H1 (cell line): ENCODE measurements at regions of chr20 and their contacts with region 1.

Region 1: DNA sequence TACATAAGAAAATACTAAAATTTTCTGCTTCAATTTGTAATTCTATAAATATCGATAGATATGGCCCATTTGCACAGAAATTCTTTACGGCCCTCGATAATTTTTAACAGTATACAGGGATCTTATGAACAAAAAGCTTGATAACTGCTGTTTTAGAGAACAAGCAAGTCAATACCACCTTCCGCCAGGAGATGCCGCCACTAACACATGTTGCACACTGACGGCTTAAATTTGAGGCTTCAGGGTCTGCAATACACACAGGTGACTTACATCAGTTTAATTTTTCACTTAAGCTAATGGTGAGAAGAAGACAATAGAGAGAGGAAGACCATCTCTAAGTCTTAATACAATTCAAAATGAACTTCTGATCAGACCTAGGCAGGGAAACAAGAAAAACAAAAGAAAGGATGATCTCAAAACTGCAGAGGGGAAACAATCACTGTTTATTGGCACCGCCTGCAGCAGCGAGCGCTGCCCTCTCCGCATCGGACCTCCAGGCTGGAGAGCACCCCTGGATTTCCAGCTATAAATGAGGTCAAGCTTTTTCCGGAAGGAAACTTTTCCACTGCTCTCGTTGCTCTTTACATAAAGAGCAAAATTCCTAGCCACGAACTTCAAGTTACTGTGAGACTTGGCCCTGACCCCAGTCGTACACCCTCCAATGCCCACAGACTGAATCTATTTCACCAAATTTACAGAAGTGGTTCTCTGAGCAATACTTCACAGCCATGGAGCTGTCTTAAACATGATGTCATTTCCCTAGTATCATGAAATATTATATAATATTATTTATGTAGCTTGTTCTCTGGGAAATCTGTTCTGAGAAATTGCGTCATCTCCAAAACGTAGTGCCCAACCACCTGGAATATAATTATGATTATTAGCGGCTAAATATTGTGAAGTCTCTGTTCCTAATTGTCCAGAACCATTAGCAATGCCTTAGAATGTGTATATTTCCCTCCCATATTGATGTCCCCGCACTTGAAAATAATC is 54.1 kb downstream of the OTOR start:
- DNase-seq: peak; percentile 49 to 93
- H3K4me3 ChIP-seq: no peak overlapping the region
- H3K27ac ChIP-seq: no peak overlapping the region
- H3K4me1 ChIP-seq: no peaks in the 10 kb centered on the region
- H3K27me3 ChIP-seq: no peaks in the 10 kb centered on the region
- CTCF ChIP-seq: peak; percentile 63 to 81 (median 78)
- EP300 ChIP-seq: no peak
- POLR2A ChIP-seq: no peak
- RAD21 ChIP-seq: peak; percentile 92 to 94

Region 2: GRCh38 chr20:16732506-16733152 is 69.6 kb before region 1 on chr20:
- CTCF ChIA-PET with region 1: no interaction called
- POLR2A ChIA-PET with region 1: no interaction called
- DNase-seq: no peak
- H3K4me3 ChIP-seq: no peak overlapping the region
- H3K27ac ChIP-seq: no peak overlapping the region
- H3K4me1 ChIP-seq: peaks cover 0 to 4% (median 1%) of the 10 kb centered on the region in 4 experiments; a peak in 2 of 7 replicates
- H3K27me3 ChIP-seq: peaks cover 0 to 1% (median under 1%) of the 10 kb centered on the region in 4 experiments; a peak in 2 of 7 replicates
- CTCF ChIP-seq: no peak
- EP300 ChIP-seq: no peak
- POLR2A ChIP-seq: no peak
- RAD21 ChIP-seq: no peak

Region 3: GRCh38 chr20:16821211-16822089 is 19.2 kb after region 1 on chr20:
- CTCF ChIA-PET with region 1: interaction called, 133 read pairs
- POLR2A ChIA-PET with region 1: no interaction called
- DNase-seq: peak; percentile 13 to 52
- H3K4me3 ChIP-seq: no peak overlapping the region
- H3K27ac ChIP-seq: no peak overlapping the region
- H3K4me1 ChIP-seq: no peaks in the 10 kb centered on the region
- H3K27me3 ChIP-seq: no peaks in the 10 kb centered on the region
- CTCF ChIP-seq: peak; percentile 65 to 83 (median 82)
- EP300 ChIP-seq: peak in 1 of 2 experiments; percentile 18; a peak in 1 of 3 replicates
- POLR2A ChIP-seq: no peak
- RAD21 ChIP-seq: peak; percentile 82 to 89

Region 4: GRCh38 chr20:17281478-17281877 is 479.3 kb after region 1 on chr20:
- CTCF ChIA-PET with region 1: interaction called, 19 read pairs
- POLR2A ChIA-PET with region 1: no interaction called
- DNase-seq: peak in 1 of 2 experiments; percentile 84
- H3K4me3 ChIP-seq: no peak overlapping the region
- H3K27ac ChIP-seq: no peak overlapping the region
- H3K4me1 ChIP-seq: peaks cover 0 to under 1% (median 0%) of the 10 kb centered on the region in 4 experiments; a peak in 2 of 7 replicates
- H3K27me3 ChIP-seq: peaks cover 0 to 1% (median 0%) of the 10 kb centered on the region in 4 experiments; a peak in 1 of 7 replicates
- CTCF ChIP-seq: peak; percentile 56 to 83 (median 72)
- EP300 ChIP-seq: no peak
- POLR2A ChIP-seq: no peak
- RAD21 ChIP-seq: peak; percentile 73 to 76

Region 5: GRCh38 chr20:17431621-17432364 is 629.6 kb after region 1 on chr20:
- CTCF ChIA-PET with region 1: interaction called, 110 read pairs
- POLR2A ChIA-PET with region 1: no interaction called
- DNase-seq: peak; percentile 23 to 85
- H3K4me3 ChIP-seq: no peak overlapping the region
- H3K27ac ChIP-seq: no peak overlapping the region
- H3K4me1 ChIP-seq: peaks cover 0 to 5% (median under 1%) of the 10 kb centered on the region in 4 experiments; a peak in 2 of 7 replicates
- H3K27me3 ChIP-seq: no peaks in the 10 kb centered on the region; a peak in 1 of 7 replicates
- CTCF ChIP-seq: peak; percentile 75 to 84 (median 78)
- EP300 ChIP-seq: no peak
- POLR2A ChIP-seq: no peak
- RAD21 ChIP-seq: peak; percentile 88 to 92